Cardiac septum (tissue), 1 donor: ENCODE measurements at regions of chr19 and their contacts with region 1.

Region 1: DNA sequence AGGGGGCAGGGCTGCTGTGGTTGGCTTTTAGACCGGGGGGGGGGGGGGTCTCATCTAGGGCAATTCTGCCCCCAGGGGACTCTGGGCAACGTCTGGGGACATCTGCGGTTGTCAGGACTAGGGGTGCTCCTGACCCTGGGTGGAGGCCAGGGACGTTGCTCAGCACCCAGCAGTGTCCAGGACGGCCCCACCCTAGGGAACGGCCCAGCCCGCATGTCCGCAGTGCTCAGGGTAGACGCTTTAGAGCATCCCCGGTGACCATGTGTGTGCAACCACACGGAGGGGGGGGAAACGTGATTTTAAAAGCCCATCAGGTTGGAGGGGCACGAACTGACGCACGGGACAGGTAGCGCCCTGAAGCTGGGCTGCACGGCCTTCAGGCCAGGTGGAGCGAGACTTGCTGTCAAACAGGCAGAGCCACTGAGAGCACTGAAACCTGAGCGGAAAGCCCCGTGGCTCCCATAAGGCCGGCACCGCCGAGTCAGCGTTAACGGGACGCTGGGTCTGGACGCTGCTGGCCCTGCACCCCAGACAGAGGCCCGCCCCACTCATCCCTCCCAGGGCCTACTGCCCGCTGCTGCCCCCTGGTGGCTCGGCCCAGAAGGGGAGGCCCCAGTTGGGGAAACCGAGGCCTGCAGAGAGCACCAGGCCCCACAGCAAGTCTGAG is 8.3 kb downstream of the CACTIN start:
- DNase-seq: no peak

Region 2: GRCh38 chr19:3304871-3305423 is 313.3 kb before region 1 on chr19:
- intact Hi-C with region 1: loop called (anchors 2 kb)
- DNase-seq: peak; percentile 80

Region 3: GRCh38 chr19:3429581-3430080 is 188.6 kb before region 1 on chr19:
- intact Hi-C with region 1: no loop called
- DNase-seq: peak; percentile 94

Region 4: GRCh38 chr19:3544742-3545668 is 73.3 kb before region 1 on chr19:
- intact Hi-C with region 1: loop called (anchors 1 kb)
- DNase-seq: peak; percentile 90

Region 5: DNA sequence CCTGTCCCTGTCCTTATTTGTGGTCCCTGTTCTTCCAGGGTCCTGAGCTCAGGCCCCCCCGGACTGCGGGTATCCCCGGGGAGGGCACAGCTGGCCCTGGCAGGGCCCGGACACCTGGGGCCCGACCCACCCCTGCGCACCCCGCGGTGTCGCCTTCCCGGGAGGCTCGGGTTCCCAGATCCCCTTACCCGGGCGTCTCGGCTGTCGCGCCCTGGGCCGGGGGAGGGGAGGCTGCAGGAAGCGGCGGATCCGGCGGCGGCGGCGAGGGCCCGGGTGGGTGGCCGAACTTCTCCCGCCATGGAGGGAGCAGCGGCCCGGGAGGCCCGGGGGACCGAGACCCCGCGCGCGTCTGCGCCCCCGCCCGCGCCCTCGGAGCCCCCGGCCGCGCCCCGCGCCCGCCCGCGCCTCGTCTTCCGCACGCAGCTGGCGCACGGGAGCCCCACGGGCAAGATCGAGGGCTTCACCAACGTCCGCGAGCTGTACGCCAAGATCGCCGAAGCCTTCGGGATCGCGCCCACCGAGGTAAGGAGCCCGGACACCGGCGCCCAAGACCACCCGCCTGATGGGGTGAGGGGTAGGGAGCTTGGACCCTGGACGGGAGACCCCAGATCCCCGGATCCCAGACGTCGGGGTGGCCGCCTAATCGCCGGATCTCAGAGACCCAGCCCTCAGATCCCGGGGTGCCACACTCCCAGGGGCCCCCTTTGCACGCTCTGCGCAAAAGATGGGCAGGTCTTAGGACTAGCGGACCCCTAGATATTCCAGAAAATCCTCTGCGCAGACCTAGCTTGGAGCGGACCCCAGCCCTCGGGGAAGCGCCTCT is 32.8 kb before region 1 on chr19 and contains the start of gene GIPC3:
- intact Hi-C with region 1: loop called (anchors 1 kb)
- DNase-seq: no peak
- total RNA-seq, gene GIPC3: 1.3 TPM